ENCODE measurements at regions of chr17 and their contacts with region 1.

Region 1: GRCh38 chr17:39325528-39326240 is 75.7 kb downstream of the FBXL20 start:
- DNase-seq: no peak
- ATAC-seq: no peak
- H3K4me3 ChIP-seq: no peak overlapping the region
- H3K27ac ChIP-seq: no peak overlapping the region
- H3K4me1 ChIP-seq: no peaks in the 10 kb centered on the region
- H3K27me3 ChIP-seq: no peaks in the 10 kb centered on the region
- CTCF ChIP-seq: no peak

Region 2: GRCh38 chr17:39284685-39285084 is 41.0 kb before region 1 on chr17:
- CTCF ChIA-PET with region 1: interaction called, 10 read pairs
- POLR2A ChIA-PET with region 1: interaction called, 7 read pairs
- in situ Hi-C with region 1: no loop called
- intact Hi-C with region 1: no loop called
- DNase-seq: no peak
- ATAC-seq: no peak
- H3K4me3 ChIP-seq: no peak overlapping the region
- H3K27ac ChIP-seq: no peak overlapping the region
- H3K4me1 ChIP-seq: no peaks in the 10 kb centered on the region
- H3K27me3 ChIP-seq: no peaks in the 10 kb centered on the region
- CTCF ChIP-seq: no peak

Region 3: GRCh38 chr17:39754161-39754951 is 428.7 kb after region 1 on chr17:
- CTCF ChIA-PET with region 1: no interaction called
- POLR2A ChIA-PET with region 1: no interaction called
- in situ Hi-C with region 1: no loop called
- intact Hi-C with region 1: no loop called
- DNase-seq: peak; percentile 35
- ATAC-seq: peak; percentile 95
- H3K4me3 ChIP-seq: peak overlapping the region; percentile 58 to 68
- H3K27ac ChIP-seq: peak overlapping the region; percentile 80
- H3K4me1 ChIP-seq: peaks cover 9% of the 10 kb centered on the region; the same call in 1 of the 2 replicates
- H3K27me3 ChIP-seq: no peaks in the 10 kb centered on the region; the same call in 1 of the 2 replicates
- CTCF ChIP-seq: peak; percentile 97